ENCODE measurements at regions of chr6 and their contacts with region 1.

Region 1: GRCh38 chr6:153032255-153032882 is 29.9 kb upstream of the MTRF1L start:
- DNase-seq: peak; percentile 69
- ATAC-seq: peak; percentile 14
- H3K4me3 ChIP-seq: no peak overlapping the region
- H3K27ac ChIP-seq: peak overlapping the region; percentile 90
- H3K4me1 ChIP-seq: peaks cover 24% of the 10 kb centered on the region
- H3K27me3 ChIP-seq: no peaks in the 10 kb centered on the region
- CTCF ChIP-seq: peak; percentile 63

Region 2: DNA sequence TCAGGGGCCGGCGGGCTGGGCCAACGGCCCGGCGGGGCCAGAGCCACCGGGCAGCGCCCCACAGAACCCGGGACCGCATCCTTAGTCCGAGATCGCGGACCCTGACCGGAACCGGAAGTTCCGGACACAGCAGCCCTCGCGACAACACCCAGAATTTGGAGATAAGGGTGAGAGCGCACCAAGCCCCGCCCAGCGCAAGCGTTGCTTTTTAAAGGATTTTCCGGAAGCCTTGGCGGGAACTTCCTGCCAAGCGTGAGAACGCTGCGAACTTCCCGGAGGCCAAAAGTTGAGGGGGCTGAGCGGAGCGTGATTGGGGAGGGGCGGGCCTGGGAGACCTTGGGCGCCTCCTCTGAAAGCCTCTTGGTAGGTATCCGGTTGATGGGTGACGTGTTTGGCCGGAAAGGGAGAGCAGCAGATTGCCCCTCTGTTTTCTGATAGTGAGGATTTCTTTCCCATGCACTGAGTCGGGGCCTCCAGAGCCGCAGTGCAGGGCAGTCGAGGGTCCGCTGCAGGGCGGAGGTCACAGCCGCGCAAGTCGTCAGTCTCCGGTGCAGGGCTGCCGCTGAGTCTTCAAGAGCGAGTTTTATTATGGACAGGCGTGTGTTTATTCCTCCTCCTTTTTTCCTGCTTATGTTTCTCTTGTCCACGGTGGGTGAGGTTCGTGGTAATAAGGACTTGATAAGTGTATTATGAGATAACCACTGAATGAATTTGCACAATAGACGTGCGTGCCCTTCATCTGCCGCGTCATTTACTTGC is 29.6 kb before region 1 on chr6 and contains the start of gene MTRF1L:
- CTCF ChIA-PET with region 1: no interaction called
- POLR2A ChIA-PET with region 1: no interaction called
- intact Hi-C with region 1: loop called (anchors 2 kb)
- DNase-seq: peak; percentile 95
- ATAC-seq: peak; percentile 90
- H3K4me3 ChIP-seq: peak within 1 kb of the TSS; percentile 100
- H3K27ac ChIP-seq: peak within 1 kb of the TSS; percentile 81
- H3K4me1 ChIP-seq: peaks cover 17% of the 10 kb centered on the region
- H3K27me3 ChIP-seq: no peaks in the 10 kb centered on the region
- CTCF ChIP-seq: no peak
- total RNA-seq, gene MTRF1L: 12.7 and 19.1 TPM in 2 replicates

Region 3: DNA sequence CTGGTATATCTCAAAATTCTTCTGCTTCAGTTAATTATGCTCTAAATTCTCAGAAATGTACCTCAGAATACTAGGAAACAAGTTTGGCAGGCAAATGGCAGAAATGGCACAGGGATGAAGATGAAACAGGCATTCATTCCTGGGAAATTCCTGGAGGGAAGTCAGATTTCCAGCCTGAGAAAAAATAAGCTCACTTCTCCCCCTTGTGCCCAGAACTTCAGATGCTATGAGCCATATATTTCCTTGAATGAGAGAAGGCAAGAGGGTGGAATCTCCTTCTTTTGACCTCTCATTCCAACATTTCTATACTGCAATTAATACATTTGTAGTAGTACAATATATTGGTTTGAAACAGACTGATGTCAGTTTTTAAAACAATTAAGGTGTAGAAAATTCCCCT is 75.9 kb after region 1 on chr6:
- CTCF ChIA-PET with region 1: interaction called, 4 read pairs
- POLR2A ChIA-PET with region 1: no interaction called
- intact Hi-C with region 1: loop called (anchors 1 kb)
- DNase-seq: peak; percentile 50
- ATAC-seq: peak; percentile 45; the same call in 1 of the 2 replicates
- H3K4me3 ChIP-seq: no peak overlapping the region
- H3K27ac ChIP-seq: no peak overlapping the region
- H3K4me1 ChIP-seq: no peaks in the 10 kb centered on the region
- H3K27me3 ChIP-seq: no peaks in the 10 kb centered on the region
- CTCF ChIP-seq: peak; percentile 64

Region 4: GRCh38 chr6:153210083-153210482 is 177.7 kb after region 1 on chr6:
- CTCF ChIA-PET with region 1: no interaction called
- POLR2A ChIA-PET with region 1: no interaction called
- intact Hi-C with region 1: loop called (anchors 10 kb)
- DNase-seq: no peak
- ATAC-seq: no peak
- H3K4me3 ChIP-seq: no peak overlapping the region
- H3K27ac ChIP-seq: no peak overlapping the region
- H3K4me1 ChIP-seq: no peaks in the 10 kb centered on the region
- H3K27me3 ChIP-seq: no peaks in the 10 kb centered on the region
- CTCF ChIP-seq: no peak

Region 5: DNA sequence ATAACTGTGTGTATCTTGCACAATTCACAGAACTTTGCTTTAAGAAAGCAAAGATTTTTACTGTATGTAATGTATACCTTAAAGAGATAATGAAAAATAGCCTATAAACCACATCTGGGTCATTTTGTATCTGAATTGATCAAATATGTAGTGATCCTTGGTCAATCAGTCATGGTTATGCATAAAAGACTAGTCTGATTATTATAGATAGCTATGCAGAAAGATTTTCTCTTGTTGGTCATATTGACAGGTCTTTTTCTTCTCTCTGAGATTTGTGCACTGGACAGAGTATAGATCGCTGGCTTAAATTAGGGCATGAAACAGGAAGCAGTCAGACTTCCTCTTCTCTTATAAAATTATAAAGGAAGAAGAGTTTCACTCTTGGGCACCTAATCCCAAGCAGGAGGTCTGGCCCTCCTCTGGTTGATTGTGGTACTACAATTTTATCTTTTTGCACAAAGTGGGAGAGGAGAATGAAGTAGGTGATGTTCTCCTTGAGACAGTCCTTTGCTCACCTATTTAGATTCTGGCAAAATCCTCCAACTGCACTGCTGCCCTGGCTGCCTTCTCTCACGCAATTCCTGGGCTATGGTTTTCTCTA is 479.6 kb after region 1 on chr6:
- CTCF ChIA-PET with region 1: interaction called, 6 read pairs
- POLR2A ChIA-PET with region 1: no interaction called
- intact Hi-C with region 1: loop called (anchors 2 kb)
- DNase-seq: peak; percentile 65
- ATAC-seq: no peak; the same call in 1 of the 2 replicates
- H3K4me3 ChIP-seq: no peak overlapping the region
- H3K27ac ChIP-seq: no peak overlapping the region
- H3K4me1 ChIP-seq: no peaks in the 10 kb centered on the region
- H3K27me3 ChIP-seq: no peaks in the 10 kb centered on the region
- CTCF ChIP-seq: peak; percentile 57